ENCODE measurements at regions of chr20 and their contacts with region 1.

Region 1: DNA sequence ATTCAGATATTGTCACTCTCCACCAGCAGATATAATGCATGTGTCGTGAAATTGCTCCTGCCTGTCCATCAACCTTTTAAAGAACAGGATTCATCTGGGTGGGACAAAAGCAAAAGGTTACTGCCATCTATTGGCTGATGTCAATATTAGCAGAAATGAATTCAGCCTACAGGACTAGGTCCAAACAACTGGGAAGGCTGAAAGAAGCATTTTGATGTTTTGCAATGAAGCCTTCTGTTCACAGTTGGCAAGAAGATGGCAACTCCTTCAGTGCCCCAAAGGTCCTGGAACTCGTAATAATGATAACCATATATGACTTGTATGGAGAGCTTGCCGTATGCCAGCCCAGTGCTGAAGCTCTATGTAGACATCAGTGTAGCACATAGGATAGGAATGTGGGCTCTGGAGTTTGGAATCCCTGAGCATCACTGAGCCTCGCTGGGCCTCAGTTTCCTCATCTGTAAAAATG is 7.5 kb downstream of the BCAS1 start:
- DNase-seq: peak in 4 of 5 donors; percentile 12 to 32 (median 20)
- H3K4me3 ChIP-seq: no peak overlapping the region
- H3K4me3 Mint-ChIP-seq: no peak overlapping the region
- H3K27ac ChIP-seq: no peak overlapping the region
- H3K27ac Mint-ChIP-seq: peak overlapping the region in 1 of 7 donors; percentile 38
- H3K4me1 ChIP-seq: no peaks in the 10 kb centered on the region
- H3K4me1 Mint-ChIP-seq: peaks cover 0 to 10% (median 2%) of the 10 kb centered on the region in 4 donors
- H3K27me3 ChIP-seq: no peaks in the 10 kb centered on the region
- H3K27me3 Mint-ChIP-seq: peaks cover 0 to 2% of the 10 kb centered on the region in 2 donors

Region 2: DNA sequence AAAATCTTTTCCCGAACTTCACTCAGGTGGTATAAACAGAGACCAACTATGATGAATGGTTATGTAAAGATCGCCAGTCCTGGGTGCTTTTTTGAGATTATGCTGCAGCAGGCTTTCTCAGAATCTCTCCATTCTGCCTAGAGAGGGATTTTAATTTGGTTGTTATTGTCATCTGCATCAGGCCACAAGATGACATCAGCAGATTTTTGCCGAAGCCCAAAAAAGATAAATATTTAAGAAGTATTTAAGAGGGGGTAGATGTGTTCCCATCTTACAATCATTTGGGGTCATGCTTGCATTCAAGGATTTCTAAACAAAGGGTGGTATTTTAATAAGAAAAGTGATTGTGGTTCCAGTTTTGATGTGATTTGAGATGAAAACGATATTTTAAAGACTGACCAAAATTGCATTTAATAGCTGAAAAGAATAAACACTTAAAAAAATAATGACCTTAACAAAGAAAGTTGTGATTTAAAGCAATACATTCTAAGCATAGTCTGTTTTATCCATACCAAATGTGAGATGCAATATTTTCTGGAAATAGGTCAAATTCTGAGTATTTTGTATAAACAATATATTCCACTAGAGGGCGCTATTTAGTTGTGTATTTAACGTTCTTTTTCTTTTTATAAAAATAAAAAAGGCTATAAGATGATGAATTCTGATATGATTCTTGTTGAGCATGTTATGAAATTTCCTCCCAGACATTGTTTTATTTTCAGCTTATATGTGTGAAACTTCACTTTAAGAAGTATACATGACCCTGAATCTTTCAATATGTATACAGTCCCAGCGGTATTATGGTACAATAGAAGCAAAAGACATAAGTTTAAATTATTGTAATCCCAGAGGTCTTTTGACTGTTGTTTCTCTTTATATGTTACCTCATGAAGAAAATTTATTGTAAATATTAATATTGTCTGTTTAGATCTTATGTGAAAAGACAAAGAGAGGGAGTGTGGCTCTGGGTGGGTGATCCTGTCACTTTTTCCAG is 1820.3 kb before region 1 on chr20:
- CTCF ChIA-PET with region 1: no interaction called
- POLR2A ChIA-PET with region 1: no interaction called
- intact Hi-C with region 1: loop called (anchors 2 kb)
- DNase-seq: peak in 4 of 5 donors; percentile 29 to 39 (median 36)
- H3K4me3 ChIP-seq: no peak overlapping the region
- H3K4me3 Mint-ChIP-seq: no peak overlapping the region
- H3K27ac ChIP-seq: no peak overlapping the region
- H3K27ac Mint-ChIP-seq: no peak overlapping the region
- H3K4me1 ChIP-seq: no peaks in the 10 kb centered on the region
- H3K4me1 Mint-ChIP-seq: no peaks in the 10 kb centered on the region
- H3K27me3 ChIP-seq: no peaks in the 10 kb centered on the region
- H3K27me3 Mint-ChIP-seq: peaks cover 0 to 2% of the 10 kb centered on the region in 2 donors

Region 3: GRCh38 chr20:52305858-52306257 is 1757.0 kb before region 1 on chr20:
- CTCF ChIA-PET with region 1: no interaction called
- POLR2A ChIA-PET with region 1: no interaction called
- intact Hi-C with region 1: loop called (anchors 5 kb)
- DNase-seq: peak in 4 of 5 donors; percentile 20 to 41 (median 34)
- H3K4me3 ChIP-seq: no peak overlapping the region
- H3K4me3 Mint-ChIP-seq: peak overlapping the region in 6 of 8 donors; percentile 7 to 52 (median 26)
- H3K27ac ChIP-seq: no peak overlapping the region
- H3K27ac Mint-ChIP-seq: peak overlapping the region in 6 of 7 donors; percentile 5 to 76 (median 54)
- H3K4me1 ChIP-seq: peaks cover 20% of the 10 kb centered on the region
- H3K4me1 Mint-ChIP-seq: peaks cover 20 to 32% (median 26%) of the 10 kb centered on the region in 4 donors
- H3K27me3 ChIP-seq: no peaks in the 10 kb centered on the region
- H3K27me3 Mint-ChIP-seq: peaks cover 0 to 2% of the 10 kb centered on the region in 2 donors

Region 4: DNA sequence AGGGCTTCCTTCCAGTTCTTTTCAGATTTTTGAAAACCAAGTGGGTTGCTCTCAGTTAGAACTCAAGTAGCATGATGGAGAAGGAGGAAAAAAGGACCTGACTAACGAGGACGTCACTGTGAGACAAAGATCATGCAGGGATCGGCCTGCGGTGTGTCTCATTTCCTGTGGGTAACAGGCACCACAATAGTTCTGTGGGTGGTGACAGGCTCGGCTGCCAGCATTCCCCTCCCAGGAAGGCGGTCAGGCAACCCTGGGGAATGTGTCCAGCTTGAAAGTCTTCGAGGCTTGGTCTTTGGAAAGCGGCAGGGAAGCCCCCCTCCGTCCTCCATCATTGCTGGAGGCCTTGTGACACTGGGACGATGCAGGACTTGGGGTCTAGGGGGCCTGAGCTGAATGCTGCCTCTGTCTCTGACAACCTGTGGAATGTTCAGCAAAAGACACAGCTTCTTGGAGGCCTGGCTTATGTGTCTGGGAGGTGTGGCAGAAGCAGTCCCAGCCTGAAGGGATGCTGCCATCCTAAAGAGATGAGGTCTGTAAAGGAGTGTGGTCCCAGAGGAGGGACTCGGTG is 113.4 kb before region 1 on chr20:
- CTCF ChIA-PET with region 1: interaction called, 4 read pairs
- POLR2A ChIA-PET with region 1: no interaction called
- intact Hi-C with region 1: loop called (anchors 5 kb)
- DNase-seq: peak; percentile 82 to 92 (median 87)
- H3K4me3 ChIP-seq: peak overlapping the region; percentile 6 to 30
- H3K4me3 Mint-ChIP-seq: peak overlapping the region; percentile 39 to 79 (median 72)
- H3K27ac ChIP-seq: peak overlapping the region; percentile 78
- H3K27ac Mint-ChIP-seq: peak overlapping the region; percentile 96 to 100 (median 99)
- H3K4me1 ChIP-seq: peaks cover 36% of the 10 kb centered on the region
- H3K4me1 Mint-ChIP-seq: peaks cover 24 to 41% (median 32%) of the 10 kb centered on the region in 4 donors
- H3K27me3 ChIP-seq: no peaks in the 10 kb centered on the region
- H3K27me3 Mint-ChIP-seq: no peaks in the 10 kb centered on the region

Region 5: GRCh38 chr20:54017809-54018208 is 45.0 kb before region 1 on chr20:
- CTCF ChIA-PET with region 1: no interaction called
- POLR2A ChIA-PET with region 1: no interaction called
- intact Hi-C with region 1: no loop called
- DNase-seq: no peak
- H3K4me3 ChIP-seq: no peak overlapping the region
- H3K4me3 Mint-ChIP-seq: no peak overlapping the region
- H3K27ac ChIP-seq: no peak overlapping the region
- H3K27ac Mint-ChIP-seq: no peak overlapping the region
- H3K4me1 ChIP-seq: no peaks in the 10 kb centered on the region
- H3K4me1 Mint-ChIP-seq: peaks cover 0 to 1% (median 0%) of the 10 kb centered on the region in 4 donors
- H3K27me3 ChIP-seq: no peaks in the 10 kb centered on the region
- H3K27me3 Mint-ChIP-seq: peaks cover 6 to 9% of the 10 kb centered on the region in 2 donors

Region 6: DNA sequence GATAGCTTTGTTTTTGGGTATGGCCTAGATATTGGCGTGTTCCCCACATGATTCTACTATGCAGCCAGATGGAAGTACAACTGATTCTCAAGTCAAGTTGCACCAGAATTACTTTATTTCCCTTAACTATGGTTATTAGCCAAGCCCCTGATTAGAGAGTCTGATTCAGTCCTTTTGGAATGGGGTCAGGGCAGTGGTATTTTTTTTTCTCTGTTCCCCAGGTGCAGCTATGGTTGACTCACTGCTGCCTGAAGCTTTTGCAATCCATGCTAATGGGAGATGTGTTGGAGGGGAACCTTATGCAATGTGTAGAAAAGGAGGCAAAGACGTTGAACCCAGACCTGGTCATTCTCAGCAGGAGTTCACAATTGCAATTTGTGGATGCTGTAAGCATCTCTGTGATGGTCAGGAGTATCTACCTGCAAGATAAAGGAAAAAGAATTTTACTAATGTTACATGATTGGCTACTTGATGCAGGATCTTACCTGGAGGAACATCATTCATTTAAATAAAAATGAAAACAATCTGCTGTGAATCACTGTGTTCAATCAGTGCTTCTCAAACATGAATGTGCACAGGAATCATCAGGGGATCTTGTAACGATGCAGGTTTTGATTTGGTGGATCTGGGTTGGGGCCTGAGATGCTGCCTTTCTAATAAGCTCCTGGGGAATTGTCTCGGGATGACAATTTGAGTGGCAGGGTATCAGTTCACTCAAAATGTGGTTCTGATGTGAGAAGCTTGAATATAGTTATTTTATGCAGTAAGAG is 194.4 kb after region 1 on chr20:
- CTCF ChIA-PET with region 1: no interaction called
- POLR2A ChIA-PET with region 1: no interaction called
- intact Hi-C with region 1: no loop called
- DNase-seq: no peak
- H3K4me3 ChIP-seq: no peak overlapping the region
- H3K4me3 Mint-ChIP-seq: no peak overlapping the region
- H3K27ac ChIP-seq: no peak overlapping the region
- H3K27ac Mint-ChIP-seq: no peak overlapping the region
- H3K4me1 ChIP-seq: no peaks in the 10 kb centered on the region
- H3K4me1 Mint-ChIP-seq: no peaks in the 10 kb centered on the region
- H3K27me3 ChIP-seq: no peaks in the 10 kb centered on the region
- H3K27me3 Mint-ChIP-seq: peaks cover 0 to 9% of the 10 kb centered on the region in 2 donors